ENCODE measurements at regions of chr18 and their contacts with region 1.

Region 1: DNA sequence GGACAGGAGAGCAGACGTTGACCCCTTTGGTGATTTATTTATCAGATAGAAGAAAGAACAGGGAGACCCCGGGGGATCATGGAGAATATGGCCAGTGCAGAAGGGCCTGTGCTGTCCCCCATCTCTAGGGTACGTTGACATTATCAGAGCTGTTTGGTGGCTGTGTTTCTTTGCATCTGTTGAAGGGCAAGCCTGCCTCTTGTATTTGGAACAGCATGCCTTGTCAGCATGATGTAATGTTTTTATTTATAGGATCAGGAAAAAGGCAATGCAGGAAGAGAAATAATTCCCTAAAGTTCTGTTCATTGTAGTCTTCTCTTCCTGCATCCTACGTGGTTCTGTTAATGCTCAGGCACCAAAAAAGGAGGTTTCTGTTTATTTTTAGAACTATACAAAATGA is 49.8 kb upstream of the CABYR start:
- DNase-seq: no peak
- H3K4me3 ChIP-seq: no peak overlapping the region
- CTCF ChIP-seq: no peak

Region 2: GRCh38 chr18:23573626-23574431 is 515.2 kb before region 1 on chr18:
- CTCF ChIA-PET with region 1: no interaction called
- POLR2A ChIA-PET with region 1: no interaction called
- DNase-seq: no peak
- H3K4me3 ChIP-seq: no peak overlapping the region
- CTCF ChIP-seq: no peak

Region 3: DNA sequence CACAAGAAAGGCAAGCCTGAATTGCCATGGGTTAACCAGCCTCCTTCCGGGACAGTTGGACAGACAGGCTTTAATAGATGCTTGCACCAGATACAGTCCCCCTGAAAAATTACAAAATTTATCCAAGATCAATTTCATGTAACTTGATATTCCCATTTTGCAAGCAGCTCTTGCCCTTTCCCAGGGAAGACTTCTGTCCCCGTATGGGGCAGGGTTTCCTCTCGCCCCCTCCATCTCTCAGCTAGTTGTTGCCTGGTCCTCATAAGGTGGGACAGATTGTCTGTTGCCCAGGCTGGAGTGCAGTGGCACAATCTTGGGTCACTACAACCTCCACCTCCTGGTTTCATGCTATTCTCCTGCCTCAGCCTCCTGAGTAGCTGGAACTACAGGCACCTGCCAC is 13.3 kb before region 1 on chr18:
- CTCF ChIA-PET with region 1: interaction called, 13 read pairs
- POLR2A ChIA-PET with region 1: no interaction called
- DNase-seq: no peak
- H3K4me3 ChIP-seq: no peak overlapping the region
- CTCF ChIP-seq: no peak